ENCODE measurements at regions of chr12 and their contacts with region 1.

Region 1: DNA sequence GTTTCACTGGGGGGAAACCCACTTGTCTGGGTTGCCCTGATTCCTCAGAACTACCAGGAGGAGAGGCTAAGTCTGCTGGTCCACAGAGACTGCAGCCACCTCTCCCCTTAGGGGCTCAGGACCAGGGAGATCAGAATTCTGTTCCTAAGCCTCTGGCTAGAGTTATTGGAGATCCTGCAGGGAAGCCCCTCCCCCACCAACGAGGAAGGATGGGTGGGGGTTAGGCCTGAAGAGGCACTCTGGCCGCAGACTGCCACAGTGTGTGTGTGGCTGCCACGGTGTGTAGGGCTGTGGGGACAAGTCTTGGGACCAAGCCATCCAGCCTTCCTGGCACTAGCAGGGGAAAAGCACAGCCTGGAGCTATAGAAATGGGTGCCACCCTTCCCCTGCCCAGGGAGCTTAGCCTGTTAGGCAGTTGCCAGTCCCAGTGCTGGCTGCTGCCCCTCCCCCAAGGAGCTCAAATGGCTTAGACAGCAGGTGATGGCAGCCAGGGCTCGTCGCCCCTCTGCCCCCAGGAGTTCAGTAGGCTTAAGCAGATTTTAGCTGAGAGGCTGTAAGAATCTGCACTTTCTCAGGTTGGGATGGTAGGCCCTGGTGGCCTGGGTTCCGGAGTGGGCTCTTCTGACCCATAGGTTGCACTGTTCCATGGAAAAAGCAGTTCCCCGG is 107.7 kb downstream of the ERGIC2 start:
- DNase-seq: no peak
- H3K4me3 ChIP-seq: no peak overlapping the region
- H3K27ac ChIP-seq: no peak overlapping the region
- H3K4me1 ChIP-seq: no peaks in the 10 kb centered on the region
- H3K27me3 ChIP-seq: no peaks in the 10 kb centered on the region
- CTCF ChIP-seq: no peak
- POLR2A ChIP-seq: no peak

Region 2: GRCh38 chr12:28698553-28698952 is 574.8 kb before region 1 on chr12:
- intact Hi-C with region 1: no loop called
- DNase-seq: no peak
- H3K4me3 ChIP-seq: no peak overlapping the region
- H3K27ac ChIP-seq: no peak overlapping the region
- H3K4me1 ChIP-seq: no peaks in the 10 kb centered on the region
- H3K27me3 ChIP-seq: no peaks in the 10 kb centered on the region
- CTCF ChIP-seq: no peak
- POLR2A ChIP-seq: no peak

Region 3: DNA sequence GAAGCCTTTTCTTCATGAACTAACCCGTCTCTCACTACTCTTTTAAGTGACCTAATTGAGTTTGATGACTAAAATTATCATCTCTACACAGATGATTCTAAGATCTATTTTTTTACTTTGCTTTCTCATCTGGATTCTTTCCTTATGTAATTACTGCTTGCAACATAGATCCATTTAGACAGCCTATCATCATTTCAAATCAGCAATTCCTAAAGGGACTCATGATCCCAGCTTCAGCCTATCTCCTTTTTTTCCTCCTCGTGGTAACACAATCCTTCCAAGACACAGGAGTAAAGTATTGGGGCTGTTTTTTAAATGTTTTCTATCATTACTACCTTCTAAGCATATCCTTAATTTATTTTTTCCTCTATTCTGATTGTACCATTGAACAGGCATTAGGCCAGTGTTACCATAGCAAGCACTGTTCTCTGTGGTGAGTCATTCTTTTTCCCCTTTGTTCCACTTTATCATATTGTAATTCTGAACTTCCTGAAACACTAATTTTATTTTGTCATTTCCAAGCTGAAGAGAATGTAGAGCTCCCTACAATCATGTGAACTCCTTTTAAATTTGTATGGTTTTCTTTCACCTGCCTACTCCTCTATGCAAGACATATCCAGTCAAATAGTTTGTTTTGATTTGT is 314.6 kb before region 1 on chr12:
- intact Hi-C with region 1: loop called (anchors 5 kb)
- DNase-seq: no peak
- H3K4me3 ChIP-seq: peak overlapping the region in 1 of 3 donors; percentile 24
- H3K27ac ChIP-seq: peak overlapping the region; percentile 76 to 87
- H3K4me1 ChIP-seq: peaks cover 5 to 8% of the 10 kb centered on the region in 2 donors
- H3K27me3 ChIP-seq: no peaks in the 10 kb centered on the region
- CTCF ChIP-seq: no peak
- POLR2A ChIP-seq: no peak

Region 4: DNA sequence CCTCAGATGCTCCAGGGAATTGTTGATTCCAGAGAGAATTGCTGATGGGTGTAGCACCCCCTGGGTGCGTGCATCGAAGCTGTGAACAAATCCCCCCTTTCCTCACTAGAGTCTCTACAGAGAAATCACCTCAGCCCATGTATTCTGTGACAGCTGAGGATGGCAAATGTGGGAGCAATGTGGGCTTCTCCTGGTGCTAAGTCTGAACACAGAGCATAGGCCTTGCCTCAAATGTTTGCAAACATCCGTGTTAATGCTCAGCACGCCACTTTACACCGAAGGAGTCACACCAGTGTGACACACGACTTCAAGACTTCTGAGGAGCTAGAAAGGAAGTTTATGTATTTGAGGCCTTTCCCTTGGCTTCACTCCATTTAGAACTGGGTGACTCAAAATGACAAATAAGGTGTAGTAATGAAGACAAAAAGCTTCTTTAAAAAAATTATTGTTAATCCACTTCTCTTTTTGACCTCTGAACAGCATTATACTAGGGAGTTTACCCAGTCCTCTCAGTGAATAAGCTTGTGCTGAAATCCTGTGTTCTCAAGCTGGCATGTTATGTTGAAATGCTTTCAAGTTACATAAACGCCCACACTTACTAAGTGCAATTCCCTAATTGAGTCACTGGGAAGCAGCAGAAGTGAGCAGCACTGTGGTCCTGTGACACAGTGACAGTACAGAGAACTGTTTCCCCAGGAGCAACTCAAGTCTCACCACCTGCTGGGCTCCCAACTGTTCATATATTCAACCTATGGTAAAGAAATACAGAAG is 31.3 kb before region 1 on chr12:
- intact Hi-C with region 1: no loop called
- DNase-seq: peak in 1 of 2 donors; percentile 31
- H3K4me3 ChIP-seq: no peak overlapping the region
- H3K27ac ChIP-seq: peak overlapping the region; percentile 72 to 84
- H3K4me1 ChIP-seq: peaks cover 0 to 3% of the 10 kb centered on the region in 2 donors
- H3K27me3 ChIP-seq: no peaks in the 10 kb centered on the region
- CTCF ChIP-seq: peak in 1 of 3 donors; percentile 30
- POLR2A ChIP-seq: no peak

Region 5: GRCh38 chr12:29317556-29318363 is 44.4 kb after region 1 on chr12:
- intact Hi-C with region 1: no loop called
- DNase-seq: no peak
- H3K4me3 ChIP-seq: no peak overlapping the region
- H3K27ac ChIP-seq: no peak overlapping the region
- H3K4me1 ChIP-seq: no peaks in the 10 kb centered on the region
- H3K27me3 ChIP-seq: no peaks in the 10 kb centered on the region
- CTCF ChIP-seq: peak in 2 of 3 donors; percentile 53 to 77
- POLR2A ChIP-seq: no peak

Region 6: DNA sequence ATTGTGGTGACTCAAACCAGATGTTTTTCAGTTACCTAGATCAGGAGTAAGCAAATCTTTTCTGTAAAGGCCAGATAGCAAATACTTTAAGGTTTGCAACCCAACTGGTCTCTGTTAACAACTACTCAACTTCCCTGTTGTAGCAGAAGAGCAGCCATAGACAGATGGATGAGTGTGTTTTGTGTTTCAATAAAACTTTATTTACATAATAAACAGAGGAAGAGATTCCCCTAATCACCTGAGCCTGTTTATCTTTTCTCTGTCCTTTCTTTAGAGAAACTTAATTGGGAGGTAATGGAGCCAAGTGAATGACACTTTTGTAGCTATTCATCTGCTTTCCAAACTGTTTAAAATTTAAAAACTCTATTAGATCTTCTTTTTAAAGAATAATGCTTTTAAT is 1057.3 kb after region 1 on chr12:
- intact Hi-C with region 1: loop called (anchors 10 kb)
- DNase-seq: no peak
- H3K4me3 ChIP-seq: no peak overlapping the region
- H3K27ac ChIP-seq: no peak overlapping the region
- H3K4me1 ChIP-seq: no peaks in the 10 kb centered on the region
- H3K27me3 ChIP-seq: no peaks in the 10 kb centered on the region
- CTCF ChIP-seq: no peak
- POLR2A ChIP-seq: no peak